ENCODE measurements at regions of chr7 and their contacts with region 1.

Region 1: GRCh38 chr7:3154912-3155494 is 111.3 kb upstream of the CARD11 start:
- DNase-seq: peak; percentile 68
- H3K4me3 ChIP-seq: no peak overlapping the region
- H3K27ac ChIP-seq: no peak overlapping the region
- H3K4me1 ChIP-seq: peaks cover 8% of the 10 kb centered on the region
- H3K27me3 ChIP-seq: peaks cover 2% of the 10 kb centered on the region
- CTCF ChIP-seq: peak; percentile 75

Region 2: GRCh38 chr7:2863461-2864066 is 291.4 kb before region 1 on chr7:
- CTCF ChIA-PET with region 1: no interaction called
- POLR2A ChIA-PET with region 1: no interaction called
- intact Hi-C with region 1: loop called (anchors 2 kb)
- DNase-seq: peak; percentile 77
- H3K4me3 ChIP-seq: no peak overlapping the region
- H3K27ac ChIP-seq: peak overlapping the region; percentile 54
- H3K4me1 ChIP-seq: peaks cover 9% of the 10 kb centered on the region
- H3K27me3 ChIP-seq: no peaks in the 10 kb centered on the region
- CTCF ChIP-seq: no peak

Region 3: GRCh38 chr7:2880874-2881533 is 274.0 kb before region 1 on chr7:
- CTCF ChIA-PET with region 1: no interaction called
- POLR2A ChIA-PET with region 1: no interaction called
- intact Hi-C with region 1: loop called (anchors 5 kb)
- DNase-seq: no peak
- H3K4me3 ChIP-seq: no peak overlapping the region
- H3K27ac ChIP-seq: no peak overlapping the region
- H3K4me1 ChIP-seq: peaks cover 10% of the 10 kb centered on the region
- H3K27me3 ChIP-seq: no peaks in the 10 kb centered on the region
- CTCF ChIP-seq: no peak

Region 4: DNA sequence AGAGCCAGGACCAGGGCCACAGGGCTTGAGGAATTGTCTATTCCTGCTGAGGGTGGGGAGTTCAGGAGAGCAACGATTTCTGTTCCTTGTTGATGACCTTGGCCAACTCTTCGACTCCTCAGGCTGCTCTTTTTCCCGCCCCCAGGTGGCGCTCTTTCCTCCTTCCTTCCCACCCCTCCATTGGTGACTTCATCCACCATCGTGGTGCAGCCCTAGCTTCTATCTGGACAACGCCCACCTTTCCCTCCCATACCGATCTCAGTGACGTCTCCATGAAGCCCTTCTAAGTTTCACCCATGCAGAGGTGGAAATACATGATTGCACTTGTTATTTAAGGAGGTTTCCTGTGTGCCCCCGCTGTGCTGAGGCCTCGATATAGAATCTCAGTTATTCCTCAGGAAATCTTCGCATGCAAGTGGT is 89.3 kb before region 1 on chr7:
- CTCF ChIA-PET with region 1: no interaction called
- POLR2A ChIA-PET with region 1: no interaction called
- intact Hi-C with region 1: loop called (anchors 10 kb)
- DNase-seq: peak; percentile 67
- H3K4me3 ChIP-seq: no peak overlapping the region
- H3K27ac ChIP-seq: no peak overlapping the region
- H3K4me1 ChIP-seq: no peaks in the 10 kb centered on the region
- H3K27me3 ChIP-seq: peaks cover 4% of the 10 kb centered on the region
- CTCF ChIP-seq: peak; percentile 79